CD14-positive monocyte (primary cell): ENCODE measurements at regions of chr5 and their contacts with region 1.

Region 1: GRCh38 chr5:177454397-177455035 is 7.9 kb downstream of the PRR7 start:
- DNase-seq: peak; percentile 91 to 95 (median 95)
- H3K4me3 ChIP-seq: peak overlapping the region; percentile 32 to 77 (median 35)
- H3K4me3 Mint-ChIP-seq: peak overlapping the region; percentile 73 to 85
- H3K27ac ChIP-seq: peak overlapping the region in 1 of 2 donors; percentile 51
- H3K27ac Mint-ChIP-seq: peak overlapping the region in 3 of 7 donors; percentile 58 to 65 (median 63)
- H3K4me1 ChIP-seq: peaks cover 36 to 43% of the 10 kb centered on the region in 2 donors
- H3K4me1 Mint-ChIP-seq: peaks cover 25% of the 10 kb centered on the region
- H3K27me3 ChIP-seq: peaks cover 0 to 37% of the 10 kb centered on the region in 2 donors
- H3K27me3 Mint-ChIP-seq: peaks cover 37 to 51% (median 42%) of the 10 kb centered on the region in 3 donors
- CTCF ChIP-seq: peak; percentile 85

Region 2: DNA sequence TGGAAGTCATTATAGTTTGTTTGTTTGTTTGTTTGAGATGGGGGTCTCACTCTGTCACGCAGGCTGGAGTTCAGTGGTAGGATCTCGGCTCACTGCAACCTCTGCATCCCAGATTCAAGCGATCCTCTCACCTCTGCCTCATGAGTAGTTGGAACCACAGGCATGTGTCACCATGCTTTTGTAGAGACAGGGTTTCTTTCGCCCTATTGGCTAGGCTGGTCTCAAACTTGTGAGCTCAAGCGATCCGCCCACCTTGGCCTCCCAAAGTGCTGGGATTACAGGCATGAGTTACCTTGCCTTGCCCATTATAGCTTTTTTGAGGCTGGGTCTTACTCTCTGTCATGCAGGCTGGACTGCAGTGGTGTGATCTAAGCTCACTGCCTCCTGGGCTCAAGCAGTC is 292.1 kb before region 1 on chr5:
- intact Hi-C with region 1: no loop called
- DNase-seq: no peak
- H3K4me3 ChIP-seq: no peak overlapping the region
- H3K4me3 Mint-ChIP-seq: no peak overlapping the region
- H3K27ac ChIP-seq: no peak overlapping the region
- H3K27ac Mint-ChIP-seq: peak overlapping the region in 2 of 7 donors; percentile 16 to 50
- H3K4me1 ChIP-seq: no peaks in the 10 kb centered on the region
- H3K4me1 Mint-ChIP-seq: peaks cover 8% of the 10 kb centered on the region
- H3K27me3 ChIP-seq: no peaks in the 10 kb centered on the region
- H3K27me3 Mint-ChIP-seq: peaks cover 0 to 1% (median 0%) of the 10 kb centered on the region in 3 donors
- CTCF ChIP-seq: no peak

Region 3: GRCh38 chr5:177311723-177312648 is 142.5 kb before region 1 on chr5 and contains the start of gene MXD3:
- intact Hi-C with region 1: loop called in 1 of 2 experiments (anchors 5 kb)
- DNase-seq: peak; percentile 90 to 95 (median 90)
- H3K4me3 ChIP-seq: peak within 1 kb of the TSS; percentile 40 to 97 (median 68)
- H3K4me3 Mint-ChIP-seq: peak within 1 kb of the TSS; percentile 89 to 98
- H3K27ac ChIP-seq: peak within 1 kb of the TSS; percentile 44 to 68
- H3K27ac Mint-ChIP-seq: peak within 1 kb of the TSS; percentile 73 to 95 (median 85)
- H3K4me1 ChIP-seq: peaks cover 63 to 72% of the 10 kb centered on the region in 2 donors
- H3K4me1 Mint-ChIP-seq: peaks cover 61% of the 10 kb centered on the region
- H3K27me3 ChIP-seq: no peaks in the 10 kb centered on the region
- H3K27me3 Mint-ChIP-seq: peaks cover 0 to 3% (median 0%) of the 10 kb centered on the region in 3 donors
- CTCF ChIP-seq: no peak
- polyA plus RNA-seq, gene MXD3: 21.5 to 61.9 (median 25.5) TPM

Region 4: GRCh38 chr5:177403792-177404640 is 50.5 kb before region 1 on chr5:
- intact Hi-C with region 1: loop called (anchors 1 to 2 kb)
- DNase-seq: peak; percentile 90 to 92 (median 91)
- H3K4me3 ChIP-seq: peak overlapping the region; percentile 21 to 74 (median 39)
- H3K4me3 Mint-ChIP-seq: peak overlapping the region; percentile 72 to 87
- H3K27ac ChIP-seq: no peak overlapping the region
- H3K27ac Mint-ChIP-seq: peak overlapping the region in 5 of 7 donors; percentile 33 to 80 (median 53)
- H3K4me1 ChIP-seq: peaks cover 45 to 46% of the 10 kb centered on the region in 2 donors
- H3K4me1 Mint-ChIP-seq: peaks cover 40% of the 10 kb centered on the region
- H3K27me3 ChIP-seq: peaks cover 26 to 43% of the 10 kb centered on the region in 2 donors
- H3K27me3 Mint-ChIP-seq: peaks cover 38 to 57% (median 51%) of the 10 kb centered on the region in 3 donors
- CTCF ChIP-seq: peak; percentile 76

Region 5: DNA sequence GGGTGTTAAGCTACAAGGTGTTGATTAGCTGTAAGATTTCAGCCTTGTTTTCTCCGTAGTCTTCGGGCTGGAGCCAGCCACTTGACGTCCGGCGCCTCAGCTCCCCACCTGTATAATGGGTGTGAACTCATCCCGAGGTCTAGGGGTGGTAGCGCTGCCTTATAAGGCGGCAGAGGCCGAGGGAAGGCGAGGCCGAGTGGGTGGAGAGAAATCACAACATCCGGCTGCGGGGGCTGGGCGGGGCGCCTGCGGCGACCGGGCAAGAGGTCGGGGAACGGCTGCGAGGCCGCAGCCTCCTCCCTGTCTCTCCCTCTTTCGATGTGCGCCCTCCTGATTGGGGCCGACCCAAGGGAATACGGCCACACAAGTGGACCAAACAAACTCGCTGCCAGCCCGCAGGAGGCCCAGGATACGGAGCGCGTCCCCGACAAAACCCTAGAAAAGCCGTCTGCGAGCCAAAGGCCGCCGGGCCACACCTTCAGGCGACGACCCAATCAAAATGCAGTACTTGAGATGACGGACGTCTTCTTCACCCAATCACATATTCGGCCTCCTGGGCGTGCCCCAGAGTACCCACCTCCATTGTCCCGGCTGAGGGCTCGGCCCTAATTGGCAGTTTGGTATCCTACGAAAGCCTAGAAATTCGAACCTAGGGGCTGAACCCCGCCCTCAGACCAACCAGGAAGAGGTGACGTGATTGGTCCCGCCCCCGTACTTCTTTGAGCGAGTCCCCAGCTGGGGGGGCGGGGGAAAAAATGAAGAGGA is 28.5 kb before region 1 on chr5:
- intact Hi-C with region 1: loop called (anchors 2 kb)
- DNase-seq: peak; percentile 100
- H3K4me3 ChIP-seq: peak overlapping the region; percentile 32 to 74 (median 34)
- H3K4me3 Mint-ChIP-seq: peak overlapping the region; percentile 80 to 91
- H3K27ac ChIP-seq: peak overlapping the region; percentile 84 to 88
- H3K27ac Mint-ChIP-seq: peak overlapping the region; percentile 97 to 100 (median 99)
- H3K4me1 ChIP-seq: peaks cover 47 to 54% of the 10 kb centered on the region in 2 donors
- H3K4me1 Mint-ChIP-seq: peaks cover 55% of the 10 kb centered on the region
- H3K27me3 ChIP-seq: no peaks in the 10 kb centered on the region
- H3K27me3 Mint-ChIP-seq: peaks cover 0 to 1% (median 0%) of the 10 kb centered on the region in 3 donors
- CTCF ChIP-seq: no peak

Region 6: GRCh38 chr5:177431317-177432142 is 23.0 kb before region 1 on chr5:
- intact Hi-C with region 1: loop called (anchors 2 kb)
- DNase-seq: peak; percentile 61 to 70 (median 67)
- H3K4me3 ChIP-seq: peak overlapping the region in 1 of 3 experiments; percentile 59
- H3K4me3 Mint-ChIP-seq: peak overlapping the region; percentile 57 to 70
- H3K27ac ChIP-seq: peak overlapping the region; percentile 98 to 100
- H3K27ac Mint-ChIP-seq: peak overlapping the region; percentile 78 to 100 (median 99)
- H3K4me1 ChIP-seq: peaks cover 60 to 68% of the 10 kb centered on the region in 2 donors
- H3K4me1 Mint-ChIP-seq: peaks cover 50% of the 10 kb centered on the region
- H3K27me3 ChIP-seq: no peaks in the 10 kb centered on the region
- H3K27me3 Mint-ChIP-seq: no peaks in the 10 kb centered on the region
- CTCF ChIP-seq: no peak